ENCODE measurements at regions of chr2 and their contacts with region 1.

Region 1: DNA sequence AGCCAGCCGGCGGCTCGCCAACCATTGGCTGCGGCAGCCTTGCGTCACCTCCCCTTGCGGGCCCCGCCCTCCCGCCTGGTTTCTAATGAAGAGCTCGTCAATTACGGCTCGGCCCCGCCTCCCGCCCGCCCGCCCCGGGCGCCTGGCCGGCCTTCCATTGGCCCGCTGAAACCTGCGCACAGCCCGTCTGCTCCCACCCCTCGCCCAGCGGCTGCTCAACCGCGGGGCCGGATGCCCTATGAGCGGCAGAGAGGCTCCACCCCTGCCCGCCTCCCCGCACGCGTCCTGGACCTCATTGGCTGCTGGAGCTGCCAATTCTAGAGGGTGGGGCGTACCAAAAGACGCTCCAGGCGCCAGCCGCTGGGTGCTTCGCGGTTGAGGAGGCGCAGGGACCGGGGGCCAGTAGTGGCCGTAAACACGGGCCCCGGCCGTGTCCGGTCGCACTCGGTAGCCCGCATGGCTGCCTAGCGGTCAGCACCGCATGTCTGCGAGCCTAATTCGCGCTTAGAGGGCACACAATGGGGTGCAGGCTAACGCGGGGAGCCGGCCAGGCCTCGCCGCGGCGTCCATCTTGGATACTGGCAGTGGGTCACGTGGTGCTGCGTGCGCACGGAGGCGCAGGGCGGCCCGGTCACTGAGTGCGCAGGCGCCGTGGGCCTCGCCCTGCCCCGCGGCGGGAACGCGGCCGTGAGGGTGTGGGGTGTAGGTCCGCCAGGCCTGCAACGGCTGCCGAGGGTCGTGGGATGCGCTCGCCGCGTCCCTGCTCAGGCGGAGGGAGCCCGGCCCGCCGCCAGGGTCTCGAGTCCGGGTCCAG is 454 bp upstream of the HDAC4 start:
- DNase-seq: peak; percentile 100
- ATAC-seq: peak; percentile 95

Region 2: DNA sequence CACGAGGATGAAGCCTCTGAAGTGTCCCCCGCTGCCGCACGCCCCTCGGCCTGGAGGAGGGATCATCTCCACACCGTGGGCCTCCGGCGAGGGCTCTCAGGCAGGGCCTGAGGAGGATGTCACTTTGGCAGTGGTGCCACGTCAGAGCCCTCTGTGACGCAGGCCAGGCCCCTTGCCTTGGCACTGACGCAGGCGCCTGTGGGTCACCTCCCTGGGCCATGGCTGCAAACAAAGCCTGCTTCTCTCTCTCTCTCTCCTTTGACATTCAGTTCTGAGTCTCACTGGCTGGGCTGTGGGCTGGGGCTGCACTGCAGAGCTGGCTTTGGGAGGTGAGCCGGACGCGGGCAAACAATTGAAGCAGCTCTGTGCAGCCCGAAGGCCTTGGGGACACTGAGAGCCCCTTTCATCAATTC is 279.7 kb before region 1 on chr2:
- intact Hi-C with region 1: loop called (anchors 10 kb)
- DNase-seq: no peak
- ATAC-seq: peak; percentile 30

Region 3: DNA sequence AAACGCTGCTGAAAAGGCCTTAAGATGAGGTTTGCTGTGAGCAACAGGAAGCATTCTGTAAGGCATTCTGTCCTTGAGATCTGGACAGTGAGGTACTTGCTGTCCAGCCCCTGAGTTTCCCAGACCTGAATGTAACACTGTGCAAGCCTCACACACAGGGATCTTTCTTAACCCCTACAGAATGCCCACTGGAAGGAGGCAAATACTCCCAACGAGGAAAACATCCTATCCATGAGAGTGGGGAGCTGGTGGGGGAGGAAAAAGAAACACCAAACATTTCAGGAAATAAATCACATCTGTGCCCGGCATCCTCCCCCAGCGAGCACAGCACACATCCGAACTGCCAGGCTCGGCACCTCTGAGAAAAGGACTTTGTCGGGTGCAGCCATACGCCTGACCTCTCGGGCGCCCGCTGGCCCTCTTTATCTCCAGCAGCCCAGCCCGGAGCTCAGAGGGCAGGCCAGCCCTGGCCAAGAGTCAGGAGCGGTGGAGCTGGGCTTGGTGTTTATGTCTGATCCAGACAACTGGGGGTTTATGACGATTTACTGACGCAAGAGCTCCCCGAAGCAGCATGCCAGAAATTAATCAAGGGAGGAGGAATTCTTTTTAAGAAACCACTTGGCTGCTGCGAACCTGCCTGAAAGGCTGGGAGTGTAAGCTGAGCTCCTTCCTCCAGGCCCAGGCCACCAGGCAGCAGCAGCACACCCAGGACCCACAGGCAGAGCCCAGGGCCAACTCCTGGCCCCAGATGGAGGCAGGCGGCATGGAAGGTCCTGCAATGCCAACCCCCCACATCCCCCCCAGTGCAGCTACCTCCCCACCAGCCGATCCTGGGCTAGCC is 72.7 kb before region 1 on chr2:
- intact Hi-C with region 1: loop called (anchors 2 kb)
- DNase-seq: peak; percentile 92
- ATAC-seq: peak; percentile 85

Measured in Right ventricle myocardium superior (tissue), 1 donor.